CD8-positive, alpha-beta T cell (primary cell): ENCODE measurements at regions of chr3 and their contacts with region 1.

Region 1: GRCh38 chr3:30481241-30481640 is 125.2 kb upstream of the TGFBR2 start:
- DNase-seq: no peak
- ATAC-seq: no peak
- H3K4me3 ChIP-seq: no peak overlapping the region
- H3K4me3 Mint-ChIP-seq: no peak overlapping the region
- H3K27ac ChIP-seq: no peak overlapping the region
- H3K27ac Mint-ChIP-seq: no peak overlapping the region
- H3K4me1 ChIP-seq: no peaks in the 10 kb centered on the region
- H3K4me1 Mint-ChIP-seq: peaks cover 8% of the 10 kb centered on the region
- H3K27me3 ChIP-seq: no peaks in the 10 kb centered on the region
- H3K27me3 Mint-ChIP-seq: no peaks in the 10 kb centered on the region
- CTCF ChIP-seq: no peak

Region 2: DNA sequence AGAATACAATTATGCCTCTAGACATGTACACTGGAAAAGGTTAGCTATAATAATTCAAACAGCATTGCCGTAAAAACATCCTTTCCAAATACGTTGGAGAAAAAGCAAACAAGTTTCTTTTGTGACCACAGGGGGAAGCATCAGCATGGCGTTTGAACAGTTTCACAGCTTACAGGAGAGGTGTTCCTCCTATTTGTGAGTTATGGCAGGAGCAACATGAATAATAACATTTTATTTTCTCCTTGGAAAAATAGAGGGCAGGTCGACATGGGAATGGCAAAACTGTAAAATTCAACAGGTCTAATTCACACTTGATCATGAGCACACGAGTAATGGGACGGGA is 452.9 kb after region 1 on chr3:
- CTCF ChIA-PET with region 1: no interaction called
- POLR2A ChIA-PET with region 1: no interaction called
- intact Hi-C with region 1: loop called in 1 of 2 experiments (anchors 10 kb)
- DNase-seq: peak in 2 of 9 experiments; percentile 22 to 36
- ATAC-seq: no peak
- H3K4me3 ChIP-seq: no peak overlapping the region
- H3K4me3 Mint-ChIP-seq: no peak overlapping the region
- H3K27ac ChIP-seq: no peak overlapping the region
- H3K27ac Mint-ChIP-seq: no peak overlapping the region
- H3K4me1 ChIP-seq: no peaks in the 10 kb centered on the region
- H3K4me1 Mint-ChIP-seq: peaks cover 8% of the 10 kb centered on the region
- H3K27me3 ChIP-seq: no peaks in the 10 kb centered on the region
- H3K27me3 Mint-ChIP-seq: no peaks in the 10 kb centered on the region
- CTCF ChIP-seq: no peak